IMR-90 (cell line): ENCODE measurements at regions of chrX and their contacts with region 1.

Region 1: GRCh38 chrX:102599084-102599950 is at the start of gene ARMCX5:
- DNase-seq: peak; percentile 87
- ATAC-seq: peak; percentile 95
- H3K4me3 ChIP-seq: peak within 1 kb of the TSS; percentile 93
- H3K27ac ChIP-seq: peak within 1 kb of the TSS; percentile 85
- H3K4me1 ChIP-seq: no peaks in the 10 kb centered on the region; the same call in 1 of the 2 replicates
- H3K27me3 ChIP-seq: no peaks in the 10 kb centered on the region; the same call in 1 of the 2 replicates
- CTCF ChIP-seq: no peak
- POLR2A ChIP-seq: peak; percentile 74
- RAD21 ChIP-seq: no peak
- total RNA-seq, gene ARMCX5: 20.8 and 24.9 TPM in 2 replicates

Region 2: GRCh38 chrX:102652031-102652688 is 52.8 kb after region 1 on chrX:
- CTCF ChIA-PET with region 1: no interaction called
- POLR2A ChIA-PET with region 1: no interaction called
- dilution Hi-C with region 1: no loop called
- in situ Hi-C with region 1: no loop called
- intact Hi-C with region 1: loop called (anchors 5 kb)
- DNase-seq: peak; percentile 29
- ATAC-seq: peak; percentile 44
- H3K4me3 ChIP-seq: peak overlapping the region; percentile 51
- H3K27ac ChIP-seq: no peak overlapping the region
- H3K4me1 ChIP-seq: no peaks in the 10 kb centered on the region
- H3K27me3 ChIP-seq: peaks cover 2% of the 10 kb centered on the region; the same call in 1 of the 2 replicates
- CTCF ChIP-seq: peak; percentile 55
- POLR2A ChIP-seq: no peak
- RAD21 ChIP-seq: peak; percentile 38

Region 3: DNA sequence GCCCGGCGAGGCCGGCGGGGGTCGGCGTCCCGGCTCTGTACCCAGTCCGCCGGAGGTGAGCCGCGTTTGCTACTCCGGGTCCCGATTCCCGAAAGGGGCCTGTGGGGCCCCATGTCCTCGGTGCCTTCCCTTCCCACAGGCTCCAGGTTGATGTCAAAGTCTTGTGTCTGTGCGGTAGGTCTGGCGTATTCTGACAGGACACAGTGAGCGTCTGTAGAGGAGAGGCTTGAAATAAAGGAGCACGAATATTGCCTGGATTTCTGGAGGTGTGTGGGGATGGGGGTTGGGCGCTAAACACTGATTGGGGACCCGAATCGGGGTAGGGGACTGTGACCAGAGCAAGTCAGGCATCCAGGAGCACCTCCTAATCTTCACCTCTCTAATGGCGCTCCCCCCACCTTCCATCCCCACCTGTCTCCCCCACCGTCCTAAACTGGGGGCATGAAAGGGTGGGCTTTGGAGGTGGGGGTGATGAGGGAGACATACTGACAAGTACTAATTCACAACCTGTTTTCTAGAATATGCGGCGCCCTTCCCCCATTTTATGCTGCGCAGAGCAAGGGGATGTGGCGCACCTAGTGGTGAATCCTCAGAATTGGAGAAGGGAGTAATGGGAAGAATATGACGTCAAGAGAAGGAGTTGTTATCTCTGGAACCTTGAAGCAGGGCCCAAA is 113.8 kb after region 1 on chrX:
- CTCF ChIA-PET with region 1: no interaction called
- POLR2A ChIA-PET with region 1: no interaction called
- dilution Hi-C with region 1: no loop called
- in situ Hi-C with region 1: no loop called
- intact Hi-C with region 1: loop called (anchors 1 kb)
- DNase-seq: peak; percentile 41
- ATAC-seq: peak; percentile 74
- H3K4me3 ChIP-seq: peak overlapping the region; percentile 86
- H3K27ac ChIP-seq: peak overlapping the region; percentile 61
- H3K4me1 ChIP-seq: no peaks in the 10 kb centered on the region
- H3K27me3 ChIP-seq: no peaks in the 10 kb centered on the region; the same call in 1 of the 2 replicates
- CTCF ChIP-seq: peak; percentile 59
- POLR2A ChIP-seq: no peak
- RAD21 ChIP-seq: peak; percentile 45

Region 4: GRCh38 chrX:102768987-102769761 is 169.9 kb after region 1 on chrX:
- CTCF ChIA-PET with region 1: no interaction called
- POLR2A ChIA-PET with region 1: no interaction called
- dilution Hi-C with region 1: no loop called
- in situ Hi-C with region 1: no loop called
- intact Hi-C with region 1: loop called (anchors 5 kb)
- DNase-seq: peak; percentile 88
- ATAC-seq: peak; percentile 80
- H3K4me3 ChIP-seq: peak overlapping the region; percentile 66
- H3K27ac ChIP-seq: peak overlapping the region; percentile 59
- H3K4me1 ChIP-seq: peaks cover 4% of the 10 kb centered on the region
- H3K27me3 ChIP-seq: no peaks in the 10 kb centered on the region
- CTCF ChIP-seq: no peak
- POLR2A ChIP-seq: peak; percentile 69; the same call in 1 of the 2 replicates
- RAD21 ChIP-seq: no peak

Region 5: DNA sequence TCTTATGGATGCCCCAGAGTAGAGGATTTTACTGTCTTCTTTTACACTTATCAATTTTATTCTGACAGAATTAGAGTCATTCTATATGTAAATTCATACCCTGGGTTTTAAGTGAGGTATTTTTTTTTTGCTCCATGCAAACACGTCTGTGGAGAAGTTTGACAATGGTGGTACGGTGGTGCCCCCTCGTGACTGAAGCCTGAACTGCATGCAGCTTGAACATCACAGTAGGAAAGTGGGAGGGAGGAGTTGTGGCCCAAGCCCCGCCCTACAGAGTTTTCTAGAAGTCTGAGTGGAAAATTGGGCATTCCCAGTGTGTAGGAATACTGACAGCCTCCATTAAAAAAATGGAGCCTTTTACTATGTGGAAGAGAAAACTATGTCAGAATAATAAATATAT is 264.4 kb after region 1 on chrX:
- CTCF ChIA-PET with region 1: no interaction called
- POLR2A ChIA-PET with region 1: no interaction called
- dilution Hi-C with region 1: no loop called
- in situ Hi-C with region 1: no loop called
- intact Hi-C with region 1: loop called (anchors 1 kb)
- DNase-seq: peak; percentile 74
- ATAC-seq: peak; percentile 100
- H3K4me3 ChIP-seq: no peak overlapping the region
- H3K27ac ChIP-seq: no peak overlapping the region
- H3K4me1 ChIP-seq: no peaks in the 10 kb centered on the region
- H3K27me3 ChIP-seq: no peaks in the 10 kb centered on the region
- CTCF ChIP-seq: peak; percentile 85
- POLR2A ChIP-seq: no peak
- RAD21 ChIP-seq: peak; percentile 83